H1 (cell line): ENCODE measurements at regions of chr11 and their contacts with region 1.

Region 1: GRCh38 chr11:19561011-19561410 is 151.6 kb upstream of the NAV2 start:
- DNase-seq: no peak
- H3K4me3 ChIP-seq: no peak overlapping the region
- H3K27ac ChIP-seq: no peak overlapping the region
- H3K4me1 ChIP-seq: peaks cover 0 to 7% (median 3%) of the 10 kb centered on the region in 4 experiments; a peak in 2 of 7 replicates
- H3K27me3 ChIP-seq: no peaks in the 10 kb centered on the region; a peak in 1 of 7 replicates
- CTCF ChIP-seq: no peak
- EP300 ChIP-seq: no peak
- POLR2A ChIP-seq: no peak
- RAD21 ChIP-seq: no peak

Region 2: DNA sequence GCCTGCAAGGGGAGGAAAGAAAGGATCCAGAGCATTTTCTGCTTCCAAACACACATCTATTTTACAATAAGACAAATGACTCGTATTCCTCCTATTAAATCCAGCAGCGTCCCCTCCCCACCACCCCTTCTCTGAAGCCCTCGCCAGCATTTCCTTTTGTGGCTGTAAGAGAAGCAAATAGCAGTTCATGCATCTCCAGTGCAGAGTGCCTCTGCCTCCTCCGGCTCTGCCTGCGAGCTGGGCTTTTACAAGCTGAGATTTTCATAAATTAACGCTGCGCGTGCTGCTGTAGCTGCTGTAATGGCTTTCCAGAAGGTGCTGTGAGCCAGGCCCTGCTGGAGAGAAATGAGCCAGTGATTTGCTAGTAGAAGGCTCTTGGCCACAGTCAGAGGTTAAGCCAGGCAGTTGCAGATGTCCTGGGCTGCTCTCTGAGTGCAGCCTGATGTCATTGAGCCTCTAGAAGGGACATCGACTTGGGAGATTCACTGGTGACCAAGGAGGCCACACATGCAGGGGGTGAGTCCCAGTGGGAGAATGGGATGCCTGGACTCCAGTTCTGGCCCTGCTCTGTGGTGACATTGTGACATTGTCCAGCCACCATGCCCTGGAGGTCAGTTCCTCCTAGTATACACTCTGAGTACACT is 17.1 kb after region 1 on chr11:
- CTCF ChIA-PET with region 1: interaction called, 55 read pairs
- POLR2A ChIA-PET with region 1: no interaction called
- DNase-seq: no peak
- H3K4me3 ChIP-seq: no peak overlapping the region
- H3K27ac ChIP-seq: no peak overlapping the region
- H3K4me1 ChIP-seq: peaks cover 0 to 3% (median 0%) of the 10 kb centered on the region in 4 experiments; a peak in 1 of 7 replicates
- H3K27me3 ChIP-seq: no peaks in the 10 kb centered on the region
- CTCF ChIP-seq: no peak
- EP300 ChIP-seq: no peak
- POLR2A ChIP-seq: no peak
- RAD21 ChIP-seq: no peak

Region 3: GRCh38 chr11:19660076-19660475 is 99.1 kb after region 1 on chr11:
- CTCF ChIA-PET with region 1: interaction called, 10 read pairs
- POLR2A ChIA-PET with region 1: no interaction called
- DNase-seq: no peak
- H3K4me3 ChIP-seq: no peak overlapping the region
- H3K27ac ChIP-seq: no peak overlapping the region
- H3K4me1 ChIP-seq: no peaks in the 10 kb centered on the region
- H3K27me3 ChIP-seq: no peaks in the 10 kb centered on the region
- CTCF ChIP-seq: no peak
- EP300 ChIP-seq: no peak
- POLR2A ChIP-seq: no peak
- RAD21 ChIP-seq: no peak

Region 4: GRCh38 chr11:19698493-19699292 is 137.7 kb after region 1 on chr11:
- CTCF ChIA-PET with region 1: interaction called, 15 read pairs
- POLR2A ChIA-PET with region 1: no interaction called
- DNase-seq: no peak
- H3K4me3 ChIP-seq: no peak overlapping the region
- H3K27ac ChIP-seq: no peak overlapping the region
- H3K4me1 ChIP-seq: peaks cover 0 to 12% (median 7%) of the 10 kb centered on the region in 4 experiments; a peak in 5 of 7 replicates
- H3K27me3 ChIP-seq: no peaks in the 10 kb centered on the region; a peak in 1 of 7 replicates
- CTCF ChIP-seq: no peak
- EP300 ChIP-seq: no peak
- POLR2A ChIP-seq: no peak
- RAD21 ChIP-seq: no peak

Region 5: DNA sequence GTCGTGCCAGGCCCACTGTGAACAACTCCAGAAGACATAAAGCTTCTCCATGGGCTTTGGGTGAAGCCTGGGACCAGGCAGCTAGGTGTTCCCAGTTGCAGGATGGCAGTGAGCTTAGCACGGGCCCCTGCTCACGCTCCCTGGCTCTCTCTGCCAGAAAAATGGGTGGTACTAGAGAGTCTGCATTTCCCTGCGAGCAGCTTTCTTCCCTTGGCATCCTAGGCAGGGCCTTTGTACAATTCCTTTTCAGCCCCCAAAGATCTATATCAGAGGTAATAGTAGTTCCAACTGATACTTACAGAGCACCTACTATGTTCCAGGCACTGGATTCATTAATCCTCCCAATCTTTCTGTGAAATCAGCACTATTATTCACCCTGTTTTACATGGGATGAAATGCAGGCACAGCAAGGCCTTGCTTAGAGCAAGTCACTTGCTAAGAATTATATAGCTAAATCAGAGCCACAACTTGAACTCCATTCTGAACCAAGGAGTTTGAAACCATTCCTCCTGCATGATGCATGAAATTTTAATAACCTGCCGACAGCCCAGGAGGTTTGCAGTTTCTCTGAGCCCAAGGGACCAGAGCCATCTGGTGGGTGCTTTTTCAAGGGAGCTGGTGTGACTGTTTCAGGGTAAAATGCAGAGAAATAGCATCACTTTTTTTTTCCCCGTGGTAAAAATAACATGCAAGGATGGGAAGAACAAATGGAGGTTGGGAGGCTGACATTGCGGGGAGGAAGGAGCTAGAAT is 174.3 kb after region 1 on chr11:
- CTCF ChIA-PET with region 1: interaction called, 36 read pairs
- POLR2A ChIA-PET with region 1: no interaction called
- DNase-seq: no peak
- H3K4me3 ChIP-seq: no peak overlapping the region
- H3K27ac ChIP-seq: no peak overlapping the region
- H3K4me1 ChIP-seq: peaks cover 0 to 9% (median 0%) of the 10 kb centered on the region in 4 experiments; a peak in 1 of 7 replicates
- H3K27me3 ChIP-seq: no peaks in the 10 kb centered on the region
- CTCF ChIP-seq: no peak
- EP300 ChIP-seq: no peak
- POLR2A ChIP-seq: no peak
- RAD21 ChIP-seq: no peak

Region 6: DNA sequence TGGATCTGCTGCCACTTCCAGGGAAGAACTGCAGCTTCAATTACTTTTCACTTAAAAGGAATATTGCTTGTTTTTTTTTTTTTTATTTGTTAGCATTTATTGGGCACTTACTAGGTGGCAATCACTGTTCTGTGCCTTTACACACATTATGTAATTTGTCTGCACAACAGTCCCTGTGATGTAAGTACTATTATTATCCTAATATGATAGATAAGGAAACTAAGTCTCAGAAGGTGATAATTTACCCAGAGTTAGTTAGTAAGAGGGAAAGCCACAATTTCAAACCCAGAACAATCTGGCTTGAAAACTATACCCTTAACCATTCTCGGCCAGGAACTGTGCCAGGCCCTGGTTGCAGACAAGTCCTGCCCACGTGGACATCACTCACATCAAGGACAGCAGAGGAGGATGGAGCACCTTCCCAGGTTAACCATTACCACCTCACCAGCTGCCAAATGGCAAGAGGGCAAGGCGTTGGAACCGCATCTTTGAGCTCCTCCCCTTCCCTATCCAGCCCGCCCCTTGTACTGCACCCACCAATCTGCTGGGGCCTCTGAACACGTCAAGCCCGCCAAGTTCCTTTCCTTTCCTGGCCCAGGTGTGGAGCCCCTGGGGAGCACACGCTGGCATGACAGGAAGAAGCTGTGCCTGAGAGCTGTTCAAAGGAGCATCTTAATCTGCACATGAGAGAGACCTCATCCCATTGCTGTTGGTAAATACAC is 230.0 kb after region 1 on chr11:
- CTCF ChIA-PET with region 1: interaction called, 13 read pairs
- POLR2A ChIA-PET with region 1: no interaction called
- DNase-seq: peak in 1 of 2 experiments; percentile 74
- H3K4me3 ChIP-seq: no peak overlapping the region
- H3K27ac ChIP-seq: no peak overlapping the region
- H3K4me1 ChIP-seq: peaks cover 5 to 28% (median 17%) of the 10 kb centered on the region in 4 experiments
- H3K27me3 ChIP-seq: no peaks in the 10 kb centered on the region
- CTCF ChIP-seq: no peak
- EP300 ChIP-seq: peak in 1 of 2 experiments; percentile 89; a peak in 1 of 3 replicates
- POLR2A ChIP-seq: no peak
- RAD21 ChIP-seq: 0 out of 4 replicates have a peak, but pooled peaks of 1 of the 2 experiments have one; percentile 6